Common myeloid progenitor, CD34-positive (primary cell): ENCODE measurements at regions of chr17 and their contacts with region 1.

Region 1: GRCh38 chr17:78086740-78087139 is 41.8 kb downstream of the TMC6 start:
- DNase-seq: no peak
- H3K4me3 ChIP-seq: no peak overlapping the region
- H3K27ac ChIP-seq: no peak overlapping the region
- H3K4me1 ChIP-seq: peaks cover 0 to 9% (median 8%) of the 10 kb centered on the region in 4 experiments
- H3K27me3 ChIP-seq: no peaks in the 10 kb centered on the region

Region 2: DNA sequence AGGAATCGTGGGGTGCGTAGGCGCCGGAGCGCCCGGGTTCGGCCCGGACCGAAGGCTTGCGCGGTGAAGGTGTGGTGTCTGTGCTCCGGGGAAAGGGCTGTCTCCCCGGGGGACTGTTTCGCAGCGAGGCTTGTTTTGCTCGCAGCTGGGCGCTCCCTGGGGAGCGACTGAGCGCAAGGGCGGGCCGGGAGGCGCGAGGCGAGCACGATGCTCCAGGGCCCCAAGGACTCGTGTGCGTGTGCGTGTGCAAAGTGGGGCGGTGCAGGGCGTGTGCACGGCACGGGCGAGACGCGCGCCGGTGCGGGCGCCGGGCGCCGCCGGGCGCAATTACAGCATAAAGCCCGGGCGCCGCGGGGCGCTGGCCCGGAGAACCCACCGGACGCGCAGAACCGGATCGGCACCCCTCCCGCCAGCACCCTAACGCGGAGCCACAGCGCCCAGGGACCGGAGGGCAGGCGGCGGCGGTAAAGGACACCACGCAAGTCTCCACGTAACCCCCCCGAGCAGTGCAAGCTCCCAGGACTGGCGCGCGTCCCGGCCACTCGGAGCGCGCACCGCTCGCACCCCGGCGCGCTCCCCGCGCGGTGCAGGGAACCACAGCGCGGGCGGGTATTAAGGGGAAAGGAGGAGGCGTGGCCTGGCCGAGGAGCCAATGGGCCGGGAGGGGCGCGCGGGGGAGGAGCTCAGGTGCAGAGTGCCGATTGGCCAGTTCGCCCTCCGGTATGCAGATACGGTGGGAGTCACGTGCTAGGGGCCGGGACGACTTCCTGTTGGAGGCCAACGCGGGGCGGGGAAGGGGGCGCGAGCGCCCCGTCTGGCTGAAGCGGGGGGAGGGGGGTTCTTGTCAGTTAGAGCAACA is 128.7 kb before region 1 on chr17 and contains the start of gene TNRC6C:
- CTCF ChIA-PET with region 1: no interaction called
- POLR2A ChIA-PET with region 1: no interaction called
- DNase-seq: peak; percentile 99 to 100 (median 99)
- H3K4me3 ChIP-seq: peak within 1 kb of the TSS; percentile 70 to 96 (median 78)
- H3K27ac ChIP-seq: peak within 1 kb of the TSS in 1 of 2 experiments; percentile 8
- H3K4me1 ChIP-seq: peaks cover 17 to 26% (median 22%) of the 10 kb centered on the region in 4 experiments
- H3K27me3 ChIP-seq: peaks cover 4 to 23% (median 19%) of the 10 kb centered on the region in 5 experiments

Region 3: DNA sequence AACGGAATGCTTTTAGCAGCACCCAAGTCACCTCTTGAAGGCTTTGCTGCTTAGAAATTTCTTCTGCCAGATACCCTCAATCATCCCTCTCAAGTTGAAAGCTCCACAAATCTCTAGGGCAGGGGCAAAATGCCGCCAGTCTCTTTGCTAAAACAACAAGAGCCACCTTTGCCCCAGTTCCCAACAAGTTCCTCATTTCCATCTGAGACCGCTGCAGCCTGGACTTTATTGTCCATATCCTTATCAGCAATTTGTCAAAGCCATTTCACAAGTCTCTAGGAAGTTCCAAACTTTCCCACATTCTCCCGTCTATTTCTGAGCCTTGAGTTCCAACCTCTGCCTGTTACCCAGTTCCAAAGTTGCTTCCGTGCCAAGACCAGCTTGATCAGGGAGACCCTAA is 14.4 kb after region 1 on chr17:
- CTCF ChIA-PET with region 1: interaction called, 17 read pairs
- POLR2A ChIA-PET with region 1: interaction called, 4 read pairs
- DNase-seq: no peak
- H3K4me3 ChIP-seq: no peak overlapping the region
- H3K27ac ChIP-seq: no peak overlapping the region
- H3K4me1 ChIP-seq: no peaks in the 10 kb centered on the region
- H3K27me3 ChIP-seq: no peaks in the 10 kb centered on the region